Activated B cell treated with CpG ODN at 0.5 μM for 24 hours (primary cell): ENCODE measurements at regions of chr6 and their contacts with region 1.

Region 1: GRCh38 chr6:149316798-149317655 is 485 bp upstream of the TAB2 start:
- DNase-seq: peak; percentile 79
- ATAC-seq: peak; percentile 80
- H3K4me3 Mint-ChIP-seq: peak overlapping the region; percentile 93
- H3K27ac Mint-ChIP-seq: peak overlapping the region; percentile 87
- H3K4me1 Mint-ChIP-seq: peaks cover 37% of the 10 kb centered on the region
- H3K27me3 Mint-ChIP-seq: no peaks in the 10 kb centered on the region
- CTCF ChIP-seq: no peak

Region 2: GRCh38 chr6:149028767-149029405 is 288.1 kb before region 1 on chr6:
- CTCF ChIA-PET with region 1: no interaction called
- POLR2A ChIA-PET with region 1: interaction called, 10 read pairs
- intact Hi-C with region 1: loop called (anchors 5 kb)
- DNase-seq: no peak
- ATAC-seq: peak; percentile 33
- H3K4me3 Mint-ChIP-seq: no peak overlapping the region
- H3K27ac Mint-ChIP-seq: peak overlapping the region; percentile 75
- H3K4me1 Mint-ChIP-seq: peaks cover 43% of the 10 kb centered on the region
- H3K27me3 Mint-ChIP-seq: no peaks in the 10 kb centered on the region
- CTCF ChIP-seq: peak; percentile 65

Region 3: DNA sequence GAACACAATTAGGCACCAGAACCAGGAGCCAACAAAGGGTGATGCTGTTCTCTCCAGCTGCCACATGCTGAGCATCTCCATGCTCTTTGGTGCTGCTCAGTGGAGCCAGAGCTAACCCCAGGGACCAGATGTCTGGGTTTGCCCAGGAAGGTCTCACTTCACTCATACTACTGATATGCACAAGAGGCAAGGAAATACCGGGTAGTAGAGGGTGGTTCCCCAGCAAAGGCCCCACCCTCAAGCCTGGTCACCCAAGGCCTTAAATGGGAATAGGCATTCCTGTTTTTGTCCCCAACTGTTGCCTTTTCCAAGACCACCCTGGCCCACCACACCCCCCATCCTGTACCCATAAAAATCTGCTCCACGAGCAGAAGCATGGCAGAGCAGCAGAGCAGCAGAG is 204.1 kb before region 1 on chr6:
- CTCF ChIA-PET with region 1: no interaction called
- POLR2A ChIA-PET with region 1: interaction called, 3 read pairs
- intact Hi-C with region 1: loop called (anchors 2 kb)
- DNase-seq: no peak
- ATAC-seq: peak; percentile 74
- H3K4me3 Mint-ChIP-seq: peak overlapping the region; percentile 25
- H3K27ac Mint-ChIP-seq: peak overlapping the region; percentile 55
- H3K4me1 Mint-ChIP-seq: peaks cover 46% of the 10 kb centered on the region
- H3K27me3 Mint-ChIP-seq: no peaks in the 10 kb centered on the region
- CTCF ChIP-seq: no peak

Region 4: DNA sequence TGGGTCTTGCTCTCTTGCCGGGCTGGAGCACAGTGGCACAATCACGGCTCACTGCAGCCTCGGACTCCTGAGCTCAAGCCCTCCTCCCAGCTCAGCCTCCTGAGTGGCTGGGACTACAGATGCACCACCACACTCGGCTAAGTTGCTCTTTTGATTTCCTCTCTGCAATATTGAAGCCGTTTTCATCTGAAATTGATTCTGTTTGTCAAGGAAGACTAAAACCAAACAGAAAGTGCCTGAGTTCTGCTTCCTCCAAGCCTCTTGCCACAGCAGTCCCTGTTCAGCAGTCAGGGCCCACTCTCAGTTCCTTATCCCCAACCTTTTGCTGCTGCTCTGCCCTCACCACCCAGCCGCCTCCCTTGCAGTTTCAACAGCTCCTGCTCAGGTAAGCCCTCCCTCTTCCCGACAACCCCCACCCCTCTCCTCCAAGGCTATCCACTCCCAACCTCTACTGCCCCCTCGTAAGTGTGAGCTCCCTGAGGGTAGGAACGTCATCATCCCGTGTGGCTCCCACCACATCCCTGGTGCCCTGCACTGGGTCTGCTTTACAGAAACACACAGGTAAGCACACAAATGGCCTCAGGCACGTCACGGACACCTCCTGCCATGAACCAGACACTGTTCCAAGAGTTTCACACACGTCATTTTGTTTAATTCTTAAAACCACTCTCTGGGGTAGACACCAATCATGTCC is 70.2 kb before region 1 on chr6:
- CTCF ChIA-PET with region 1: interaction called, 3 read pairs
- POLR2A ChIA-PET with region 1: interaction called, 12 read pairs
- intact Hi-C with region 1: no loop called
- DNase-seq: peak; percentile 46
- ATAC-seq: peak; percentile 97
- H3K4me3 Mint-ChIP-seq: peak overlapping the region; percentile 82
- H3K27ac Mint-ChIP-seq: peak overlapping the region; percentile 88
- H3K4me1 Mint-ChIP-seq: peaks cover 50% of the 10 kb centered on the region
- H3K27me3 Mint-ChIP-seq: no peaks in the 10 kb centered on the region
- CTCF ChIP-seq: no peak

Region 5: DNA sequence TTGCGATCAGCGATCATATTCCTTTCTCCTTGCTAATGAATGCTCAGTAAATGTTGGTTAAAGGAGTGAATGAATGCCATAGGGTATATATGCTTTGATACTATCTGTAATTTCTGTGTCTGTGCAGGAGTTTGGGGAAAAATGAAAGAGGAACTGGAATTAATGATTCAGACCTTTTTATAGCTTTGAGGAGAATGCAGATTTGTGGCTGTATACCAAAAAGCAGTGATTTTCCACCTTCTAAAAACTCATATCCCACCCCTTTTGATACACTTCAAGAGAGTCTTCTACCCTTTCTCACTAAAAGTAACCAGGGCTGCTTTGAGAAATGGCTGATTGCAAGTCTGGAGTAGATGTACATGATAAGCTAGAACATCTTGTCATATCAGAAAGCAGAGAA is 56.5 kb after region 1 on chr6:
- CTCF ChIA-PET with region 1: interaction called, 3 read pairs
- POLR2A ChIA-PET with region 1: interaction called, 3 read pairs
- intact Hi-C with region 1: loop called (anchors 5 kb)
- DNase-seq: no peak
- ATAC-seq: peak; percentile 45
- H3K4me3 Mint-ChIP-seq: peak overlapping the region; percentile 17
- H3K27ac Mint-ChIP-seq: peak overlapping the region; percentile 62
- H3K4me1 Mint-ChIP-seq: peaks cover 52% of the 10 kb centered on the region
- H3K27me3 Mint-ChIP-seq: no peaks in the 10 kb centered on the region
- CTCF ChIP-seq: no peak

Region 6: GRCh38 chr6:149565527-149566409 is 248.7 kb after region 1 on chr6 and contains the start of gene GINM1:
- CTCF ChIA-PET with region 1: no interaction called
- POLR2A ChIA-PET with region 1: interaction called, 3 read pairs
- intact Hi-C with region 1: loop called (anchors 1 kb)
- DNase-seq: peak; percentile 97
- ATAC-seq: peak; percentile 85
- H3K4me3 Mint-ChIP-seq: peak within 1 kb of the TSS; percentile 93
- H3K27ac Mint-ChIP-seq: peak within 1 kb of the TSS; percentile 92
- H3K4me1 Mint-ChIP-seq: peaks cover 22% of the 10 kb centered on the region
- H3K27me3 Mint-ChIP-seq: no peaks in the 10 kb centered on the region
- CTCF ChIP-seq: no peak
- total RNA-seq, gene GINM1: 15.4 and 18.0 TPM in 2 replicates

Region 7: GRCh38 chr6:149680503-149680902 is 363.5 kb after region 1 on chr6:
- CTCF ChIA-PET with region 1: no interaction called
- POLR2A ChIA-PET with region 1: no interaction called
- intact Hi-C with region 1: no loop called
- DNase-seq: no peak
- ATAC-seq: no peak
- H3K4me3 Mint-ChIP-seq: no peak overlapping the region
- H3K27ac Mint-ChIP-seq: no peak overlapping the region
- H3K4me1 Mint-ChIP-seq: peaks cover 7% of the 10 kb centered on the region
- H3K27me3 Mint-ChIP-seq: no peaks in the 10 kb centered on the region
- CTCF ChIP-seq: no peak

Region 8: DNA sequence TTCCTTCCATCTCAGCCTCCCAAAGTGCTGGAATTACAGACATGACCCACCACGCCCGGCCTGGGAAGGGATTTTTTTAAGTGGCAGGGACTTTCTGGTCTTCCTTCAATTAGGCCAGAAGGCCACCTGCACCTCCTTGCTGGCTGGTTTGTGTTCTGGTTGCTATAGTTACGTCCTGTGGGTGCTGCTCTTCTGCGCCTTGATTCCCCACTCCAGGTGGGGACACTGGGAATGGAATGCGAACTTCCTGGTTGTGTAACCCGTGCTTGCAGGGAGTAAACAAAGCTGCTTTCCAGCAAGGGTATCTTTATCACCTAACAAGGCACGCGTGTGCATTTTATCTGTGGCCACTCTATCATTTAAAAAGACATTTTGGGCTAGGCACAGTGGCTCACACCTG is 1400.4 kb after region 1 on chr6:
- CTCF ChIA-PET with region 1: no interaction called
- POLR2A ChIA-PET with region 1: no interaction called
- intact Hi-C with region 1: no loop called
- DNase-seq: no peak
- ATAC-seq: no peak
- H3K4me3 Mint-ChIP-seq: no peak overlapping the region
- H3K27ac Mint-ChIP-seq: no peak overlapping the region
- H3K4me1 Mint-ChIP-seq: peaks cover 57% of the 10 kb centered on the region
- H3K27me3 Mint-ChIP-seq: no peaks in the 10 kb centered on the region
- CTCF ChIP-seq: no peak